Tibial artery (tissue), 4 donors: ENCODE measurements at regions of chr18 and their contacts with region 1.

Region 1: GRCh38 chr18:48022531-48023329 is 92.3 kb upstream of the SMAD2 start:
- DNase-seq: peak in 1 of 2 donors; percentile 59
- H3K4me3 ChIP-seq: no peak overlapping the region
- H3K27ac ChIP-seq: no peak overlapping the region
- H3K4me1 ChIP-seq: peaks cover 0 to 29% (median 24%) of the 10 kb centered on the region in 4 donors
- H3K27me3 ChIP-seq: peaks cover 0 to 32% of the 10 kb centered on the region in 2 donors
- CTCF ChIP-seq: peak; percentile 46 to 49

Region 2: DNA sequence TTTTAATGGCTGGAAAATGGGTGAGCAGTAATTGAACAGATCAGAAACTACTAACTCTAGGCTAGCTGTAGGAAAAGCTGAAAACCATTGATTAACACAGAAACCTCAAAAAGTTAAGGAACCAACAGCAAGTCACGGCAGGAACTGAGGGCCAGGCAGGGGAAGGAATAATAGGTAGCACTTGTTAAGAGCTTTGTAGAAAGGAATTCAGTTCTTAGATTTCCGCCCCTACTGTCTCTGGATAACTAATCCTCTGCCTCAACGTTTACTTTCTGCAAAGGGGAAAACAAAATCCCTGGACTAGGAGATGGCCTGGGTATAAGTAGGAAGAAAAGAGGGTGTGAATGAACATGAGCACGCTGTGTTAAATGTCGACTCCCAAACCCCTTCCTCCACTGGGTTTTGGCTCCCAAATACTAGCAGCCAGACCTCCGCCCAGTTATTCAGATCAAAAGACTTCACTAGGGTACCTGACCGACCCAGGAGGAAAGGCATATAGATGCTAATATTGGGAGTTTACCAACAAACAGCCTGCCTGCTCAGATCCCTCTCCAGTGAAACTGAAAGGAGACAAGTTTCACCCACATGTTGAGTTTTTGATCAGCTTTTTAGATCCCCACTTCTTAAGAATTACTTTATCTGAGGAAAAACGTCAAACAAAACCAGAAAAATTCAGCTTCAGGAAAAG is 104.7 kb before region 1 on chr18:
- intact Hi-C with region 1: loop called (anchors 5 kb)
- DNase-seq: no peak
- H3K4me3 ChIP-seq: no peak overlapping the region
- H3K27ac ChIP-seq: no peak overlapping the region
- H3K4me1 ChIP-seq: peaks cover 0 to 42% (median 6%) of the 10 kb centered on the region in 4 donors
- H3K27me3 ChIP-seq: no peaks in the 10 kb centered on the region
- CTCF ChIP-seq: no peak